ENCODE measurements at regions of chrX and their contacts with region 1.

Region 1: DNA sequence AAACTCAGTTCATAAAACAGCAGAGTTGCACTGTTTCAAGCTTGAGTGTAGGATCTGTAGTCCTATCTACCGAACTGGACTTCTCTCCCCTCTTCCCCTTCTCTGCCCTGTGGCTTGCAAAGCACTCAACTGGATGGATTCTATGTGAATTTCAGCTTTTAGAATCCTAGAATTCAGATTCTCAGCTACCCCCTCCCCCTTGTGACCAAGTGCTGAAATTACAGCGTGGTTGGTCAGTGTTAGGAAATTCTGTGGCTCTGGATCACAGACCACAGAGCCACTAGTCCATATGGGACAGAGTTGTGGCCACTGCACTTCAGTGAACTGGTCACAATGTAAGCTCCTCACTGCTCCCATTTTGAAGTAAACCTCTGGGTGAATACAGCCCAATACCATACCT is 64.6 kb upstream of the TRPC5 start:
- DNase-seq: peak; percentile 26
- H3K4me3 ChIP-seq: no peak overlapping the region
- H3K27ac ChIP-seq: no peak overlapping the region
- H3K4me1 ChIP-seq: no peaks in the 10 kb centered on the region
- H3K27me3 ChIP-seq: peaks cover 16% of the 10 kb centered on the region; the same call in 1 of the 2 replicates
- CTCF ChIP-seq: peak; percentile 58
- EP300 ChIP-seq: no peak
- RAD21 ChIP-seq: peak; percentile 61

Region 2: DNA sequence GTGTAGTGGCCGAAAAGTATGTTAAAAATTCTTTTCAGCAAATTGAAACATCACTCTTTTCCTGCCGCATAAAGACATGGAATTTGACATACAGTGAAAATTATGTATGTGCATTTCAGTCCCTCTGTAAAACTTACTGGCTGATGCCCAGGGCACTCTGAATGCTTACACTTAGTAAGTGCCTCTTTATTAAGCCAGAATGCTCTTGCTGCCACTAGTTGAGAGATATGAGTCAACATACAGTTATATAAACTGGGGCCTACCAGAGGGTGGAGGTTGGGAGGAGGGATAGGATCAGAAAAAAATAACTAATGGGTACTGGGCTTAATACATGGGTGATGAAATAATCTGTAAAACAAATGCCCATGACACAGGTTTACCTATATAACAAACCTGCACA is 26.5 kb before region 1 on chrX:
- CTCF ChIA-PET with region 1: no interaction called
- POLR2A ChIA-PET with region 1: no interaction called
- DNase-seq: no peak
- H3K4me3 ChIP-seq: no peak overlapping the region
- H3K27ac ChIP-seq: no peak overlapping the region
- H3K4me1 ChIP-seq: no peaks in the 10 kb centered on the region
- H3K27me3 ChIP-seq: no peaks in the 10 kb centered on the region; the same call in 1 of the 2 replicates
- CTCF ChIP-seq: no peak
- EP300 ChIP-seq: no peak
- RAD21 ChIP-seq: no peak

Region 3: GRCh38 chrX:112163906-112164305 is 16.7 kb after region 1 on chrX:
- CTCF ChIA-PET with region 1: interaction called, 14 read pairs
- POLR2A ChIA-PET with region 1: no interaction called
- DNase-seq: no peak
- H3K4me3 ChIP-seq: no peak overlapping the region
- H3K27ac ChIP-seq: no peak overlapping the region
- H3K4me1 ChIP-seq: no peaks in the 10 kb centered on the region
- H3K27me3 ChIP-seq: no peaks in the 10 kb centered on the region; the same call in 1 of the 2 replicates
- CTCF ChIP-seq: no peak
- EP300 ChIP-seq: no peak
- RAD21 ChIP-seq: no peak

Measured in SK-N-SH (cell line).